H1 (cell line): ENCODE measurements at regions of chr15 and their contacts with region 1.

Region 1: GRCh38 chr15:64681424-64682024 is 93.9 kb downstream of the RBPMS2 start:
- DNase-seq: peak in 1 of 2 experiments; percentile 41
- H3K4me3 ChIP-seq: no peak overlapping the region
- H3K27ac ChIP-seq: no peak overlapping the region
- H3K4me1 ChIP-seq: peaks cover 0 to 8% (median 1%) of the 10 kb centered on the region in 4 experiments; a peak in 5 of 7 replicates
- H3K27me3 ChIP-seq: no peaks in the 10 kb centered on the region
- CTCF ChIP-seq: peak; percentile 57 to 100 (median 95)
- EP300 ChIP-seq: no peak
- POLR2A ChIP-seq: 0 out of 3 replicates have a peak, but pooled peaks of 1 of the 2 experiments have one; percentile 31
- RAD21 ChIP-seq: peak; percentile 99

Region 2: DNA sequence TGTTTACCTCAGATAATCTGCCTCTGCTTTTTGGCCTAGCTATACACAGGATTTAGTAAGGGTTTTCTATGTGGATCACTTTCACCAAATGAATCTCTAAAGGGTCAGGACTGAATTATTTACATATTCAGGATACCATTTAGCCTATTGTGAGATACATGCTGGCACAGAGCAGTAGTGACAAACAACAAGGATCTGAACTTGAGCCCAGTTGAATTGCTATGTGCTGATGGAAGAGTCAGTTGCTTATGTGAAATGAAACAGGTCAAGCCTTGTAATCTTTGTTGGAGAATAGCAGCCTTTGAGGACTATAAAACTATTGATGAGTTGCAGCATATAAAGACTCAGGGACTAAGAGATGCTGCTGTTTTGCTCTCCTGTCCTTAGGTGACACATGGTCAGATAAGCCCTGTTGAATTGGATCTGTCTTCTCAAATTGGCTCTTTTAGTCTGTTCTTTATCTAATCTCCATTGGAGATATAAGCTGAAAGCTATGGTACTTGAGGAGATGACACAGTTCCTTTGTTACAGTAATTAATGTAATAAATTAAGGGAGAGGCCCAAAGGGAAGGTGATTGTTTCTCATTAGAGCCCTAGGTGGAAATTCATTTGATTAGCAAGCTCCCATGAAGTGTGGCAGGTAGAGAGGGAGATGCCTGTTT is 190.8 kb before region 1 on chr15:
- CTCF ChIA-PET with region 1: no interaction called
- POLR2A ChIA-PET with region 1: no interaction called
- DNase-seq: no peak
- H3K4me3 ChIP-seq: no peak overlapping the region
- H3K27ac ChIP-seq: no peak overlapping the region
- H3K4me1 ChIP-seq: peaks cover 0 to 2% (median 0%) of the 10 kb centered on the region in 4 experiments; a peak in 1 of 7 replicates
- H3K27me3 ChIP-seq: no peaks in the 10 kb centered on the region
- CTCF ChIP-seq: no peak
- EP300 ChIP-seq: no peak
- POLR2A ChIP-seq: no peak
- RAD21 ChIP-seq: no peak

Region 3: GRCh38 chr15:64619880-64620839 is 61.4 kb before region 1 on chr15:
- CTCF ChIA-PET with region 1: interaction called, 14 read pairs
- POLR2A ChIA-PET with region 1: interaction called, 3 read pairs
- DNase-seq: no peak
- H3K4me3 ChIP-seq: no peak overlapping the region
- H3K27ac ChIP-seq: no peak overlapping the region
- H3K4me1 ChIP-seq: peaks cover 0 to 11% (median 6%) of the 10 kb centered on the region in 4 experiments; a peak in 5 of 7 replicates
- H3K27me3 ChIP-seq: no peaks in the 10 kb centered on the region
- CTCF ChIP-seq: no peak
- EP300 ChIP-seq: no peak
- POLR2A ChIP-seq: no peak
- RAD21 ChIP-seq: no peak

Region 4: GRCh38 chr15:64667736-64668161 is 13.8 kb before region 1 on chr15:
- CTCF ChIA-PET with region 1: interaction called, 84 read pairs
- POLR2A ChIA-PET with region 1: interaction called, 7 read pairs
- DNase-seq: no peak
- H3K4me3 ChIP-seq: peak overlapping the region in 1 of 4 experiments; percentile 1; a peak in 1 of 8 replicates
- H3K27ac ChIP-seq: no peak overlapping the region
- H3K4me1 ChIP-seq: peaks cover 0 to 6% (median 5%) of the 10 kb centered on the region in 4 experiments; a peak in 4 of 7 replicates
- H3K27me3 ChIP-seq: no peaks in the 10 kb centered on the region
- CTCF ChIP-seq: no peak
- EP300 ChIP-seq: no peak
- POLR2A ChIP-seq: no peak
- RAD21 ChIP-seq: no peak

Region 5: DNA sequence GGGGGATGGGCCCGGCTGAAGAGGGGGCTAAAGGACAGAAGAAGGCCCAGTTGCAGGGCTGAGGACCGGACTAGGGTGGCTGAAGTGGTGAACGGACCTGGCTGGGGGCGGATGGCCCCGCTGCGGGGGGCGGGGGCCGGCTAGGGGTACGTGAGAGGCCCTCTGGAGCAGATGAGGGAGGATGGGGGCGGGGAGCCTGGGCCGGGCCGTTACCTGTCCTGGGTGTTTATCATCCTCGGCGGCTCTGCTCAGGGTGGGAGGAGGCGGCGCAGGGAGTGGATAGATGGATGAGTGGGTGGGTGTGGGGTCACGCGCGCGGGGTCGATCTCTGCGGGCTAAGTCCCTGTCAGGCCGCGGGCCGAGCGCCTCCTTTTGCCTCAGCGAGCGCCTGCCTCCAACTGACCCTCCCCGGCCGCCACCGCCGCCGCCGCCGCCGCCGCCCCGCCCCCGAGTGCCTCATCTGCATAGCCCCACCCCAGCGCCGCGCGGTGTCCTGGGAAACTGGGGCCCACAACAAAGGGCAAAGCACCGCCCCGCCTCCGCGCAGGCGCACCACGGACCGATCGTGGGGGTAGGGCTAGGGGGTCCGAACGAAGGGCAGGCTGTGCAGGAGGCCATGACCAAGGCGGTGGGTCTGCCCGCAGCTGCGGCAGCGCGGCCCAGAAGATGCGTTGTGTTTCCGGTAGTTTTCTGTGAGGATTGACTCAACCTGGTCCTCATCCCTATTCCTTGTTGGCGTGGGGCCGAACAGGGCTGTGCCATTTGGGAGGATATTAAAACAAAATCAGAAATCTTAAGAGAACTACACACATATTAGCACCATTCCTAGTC is 21.5 kb after region 1 on chr15:
- CTCF ChIA-PET with region 1: interaction called, 106 read pairs
- POLR2A ChIA-PET with region 1: interaction called, 1,192 read pairs
- DNase-seq: peak; percentile 86 to 100
- H3K4me3 ChIP-seq: peak overlapping the region; percentile 70 to 88 (median 85)
- H3K27ac ChIP-seq: peak overlapping the region; percentile 82
- H3K4me1 ChIP-seq: peaks cover 12 to 23% (median 17%) of the 10 kb centered on the region in 4 experiments
- H3K27me3 ChIP-seq: no peaks in the 10 kb centered on the region
- CTCF ChIP-seq: no peak
- EP300 ChIP-seq: peak in 1 of 2 experiments; percentile 51; a peak in 1 of 3 replicates
- POLR2A ChIP-seq: peak; percentile 69 to 90
- RAD21 ChIP-seq: no peak; a peak in 1 of 4 replicates

Region 6: DNA sequence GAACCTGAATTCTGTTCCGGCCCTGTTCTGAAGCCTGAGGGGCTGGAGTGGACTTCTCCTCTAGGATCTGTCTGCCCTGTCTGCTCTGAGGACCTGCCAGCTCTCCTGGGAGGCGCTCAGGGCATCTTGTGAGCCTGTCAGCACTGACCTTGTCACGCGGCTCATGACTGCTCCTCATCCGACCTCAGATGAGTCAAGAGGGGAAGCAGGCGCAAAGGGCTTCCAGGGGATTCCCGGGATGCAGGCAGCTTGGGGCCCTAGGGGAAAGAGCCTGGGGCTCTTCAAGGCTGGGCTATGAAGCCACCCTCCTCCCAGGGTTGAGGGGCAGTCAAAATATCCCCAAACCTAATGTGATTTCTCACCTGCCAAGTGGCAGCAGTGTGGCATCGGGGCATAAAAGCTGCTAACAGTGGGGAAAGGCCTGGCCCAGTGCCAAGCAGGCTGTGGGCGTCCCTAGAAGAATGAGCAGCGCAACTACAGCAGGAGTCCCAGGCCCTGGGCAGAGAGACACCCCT is 202.5 kb after region 1 on chr15:
- CTCF ChIA-PET with region 1: no interaction called
- POLR2A ChIA-PET with region 1: no interaction called
- DNase-seq: no peak
- H3K4me3 ChIP-seq: no peak overlapping the region
- H3K27ac ChIP-seq: no peak overlapping the region
- H3K4me1 ChIP-seq: peaks cover 0 to 4% (median 0%) of the 10 kb centered on the region in 4 experiments; a peak in 2 of 7 replicates
- H3K27me3 ChIP-seq: no peaks in the 10 kb centered on the region
- CTCF ChIP-seq: no peak
- EP300 ChIP-seq: no peak
- POLR2A ChIP-seq: no peak
- RAD21 ChIP-seq: no peak

Region 7: GRCh38 chr15:65049418-65049840 is 367.9 kb after region 1 on chr15:
- CTCF ChIA-PET with region 1: no interaction called
- POLR2A ChIA-PET with region 1: no interaction called
- DNase-seq: peak; percentile 61 to 88
- H3K4me3 ChIP-seq: peak overlapping the region in 2 of 4 experiments; percentile 15 to 44; a peak in 4 of 8 replicates
- H3K27ac ChIP-seq: no peak overlapping the region
- H3K4me1 ChIP-seq: no peaks in the 10 kb centered on the region; a peak in 1 of 7 replicates
- H3K27me3 ChIP-seq: no peaks in the 10 kb centered on the region; a peak in 2 of 7 replicates
- CTCF ChIP-seq: no peak
- EP300 ChIP-seq: no peak
- POLR2A ChIP-seq: no peak
- RAD21 ChIP-seq: no peak

Region 8: DNA sequence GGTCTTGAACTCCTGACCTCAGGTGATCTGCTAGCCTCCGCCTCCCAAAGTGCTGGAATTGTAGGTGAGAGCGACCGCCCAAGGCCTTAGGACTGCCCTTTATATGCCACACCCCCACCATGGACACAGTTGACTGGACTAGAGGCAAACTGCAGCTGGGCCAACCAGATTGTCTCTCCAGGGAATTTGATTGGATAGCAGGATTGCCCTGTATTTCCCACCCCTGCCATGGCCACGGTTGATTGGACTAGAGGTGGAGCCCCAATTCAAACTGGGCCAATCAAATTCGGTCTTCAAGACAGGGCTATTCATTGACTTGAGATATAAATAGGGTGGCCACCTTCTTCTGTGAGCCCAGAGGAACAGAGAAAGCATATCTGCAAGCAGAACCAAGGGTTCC is 510.5 kb after region 1 on chr15:
- CTCF ChIA-PET with region 1: no interaction called
- POLR2A ChIA-PET with region 1: no interaction called
- DNase-seq: no peak
- H3K4me3 ChIP-seq: no peak overlapping the region
- H3K27ac ChIP-seq: no peak overlapping the region
- H3K4me1 ChIP-seq: 0 out of 7 replicates have a peak, but pooled peaks cover 0 to 2% (median 0%) of the 10 kb centered on the region in 4 experiments
- H3K27me3 ChIP-seq: no peaks in the 10 kb centered on the region
- CTCF ChIP-seq: no peak
- EP300 ChIP-seq: no peak
- POLR2A ChIP-seq: no peak
- RAD21 ChIP-seq: no peak